ENCODE measurements at regions of chr15 and their contacts with region 1.

Region 1: GRCh38 chr15:79463043-79463780 is 31.1 kb downstream of the MINAR1 start:
- DNase-seq: no peak
- H3K4me3 ChIP-seq: no peak overlapping the region
- H3K27ac ChIP-seq: no peak overlapping the region
- H3K27me3 ChIP-seq: no peaks in the 10 kb centered on the region
- CTCF ChIP-seq: no peak

Region 2: DNA sequence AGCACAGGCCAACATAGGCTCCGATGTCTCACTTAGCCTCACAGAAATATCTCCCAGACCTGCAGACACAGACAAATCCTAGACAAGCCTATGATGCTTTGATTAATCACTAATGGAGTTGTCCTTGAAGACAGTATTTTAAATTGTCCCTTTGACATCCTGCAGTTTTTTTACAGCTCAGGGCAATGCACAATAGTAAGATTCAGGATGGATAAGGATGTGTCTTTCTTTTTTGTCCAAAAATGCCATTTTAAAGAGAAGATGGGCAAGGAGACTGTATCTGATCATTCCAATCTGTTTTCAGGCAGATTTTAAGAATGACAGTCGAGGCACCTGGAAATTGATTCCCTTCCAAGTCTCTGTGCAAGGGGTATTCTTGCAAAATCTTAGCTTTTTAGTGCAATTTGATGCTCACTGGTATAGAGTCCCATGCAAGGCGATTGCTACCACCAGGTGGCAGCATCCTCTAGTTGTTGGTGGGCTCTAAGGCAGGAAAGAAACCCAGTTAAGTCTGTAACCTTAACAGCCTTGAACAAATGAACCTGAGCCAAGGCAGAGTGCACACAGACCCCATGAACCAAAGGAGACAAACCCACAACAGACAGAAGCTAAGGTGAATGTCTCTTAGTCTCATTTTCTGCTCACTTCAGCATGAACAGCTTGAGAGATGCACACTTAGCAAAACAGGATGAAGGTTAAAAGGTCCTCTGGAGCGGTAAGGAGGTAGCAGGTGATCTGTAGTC is 82.3 kb before region 1 on chr15:
- intact Hi-C with region 1: no loop called
- DNase-seq: peak; percentile 74 to 91 (median 84)
- H3K4me3 ChIP-seq: no peak overlapping the region
- H3K27ac ChIP-seq: no peak overlapping the region
- H3K27me3 ChIP-seq: peaks cover 0 to 6% (median 0%) of the 10 kb centered on the region in 45 donors
- CTCF ChIP-seq: peak; percentile 83 to 100 (median 95)

Region 3: DNA sequence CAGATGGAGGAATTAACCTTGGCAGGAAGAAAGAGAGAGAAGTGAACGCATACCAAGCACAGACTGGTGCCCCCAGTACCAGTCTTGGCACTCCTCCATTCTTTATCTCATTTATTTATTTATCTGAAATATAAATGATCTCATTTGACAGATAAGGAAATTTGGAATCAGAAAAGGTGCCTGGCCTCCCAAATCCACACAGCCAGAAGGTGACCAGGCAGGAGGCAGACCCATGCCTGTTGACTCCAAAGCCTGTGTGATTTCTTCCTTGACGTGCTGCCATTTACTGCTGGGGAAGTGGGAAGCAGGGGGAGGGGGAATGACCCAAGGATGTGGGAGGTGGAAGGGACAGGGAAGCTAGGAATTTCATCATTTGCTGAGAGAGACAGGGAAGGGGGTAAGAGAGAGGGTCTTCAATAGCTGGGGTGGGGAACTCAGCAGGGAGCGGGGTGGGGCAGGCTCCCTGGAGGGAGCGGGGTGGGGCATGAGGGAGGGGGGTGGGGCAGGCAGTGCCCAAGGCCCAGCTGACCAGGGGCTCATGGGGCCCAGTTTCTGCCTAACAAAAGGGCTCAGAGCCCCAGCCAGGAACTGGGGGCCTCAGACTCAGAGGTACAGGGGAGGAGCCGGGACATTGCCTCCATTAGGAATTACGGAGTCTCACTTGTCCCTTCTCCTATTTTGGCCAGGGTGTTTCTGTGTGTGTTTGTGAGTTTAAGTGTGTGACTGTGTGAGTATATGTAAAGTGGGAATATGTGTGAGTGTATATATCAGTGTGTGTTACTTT is 31.9 kb after region 1 on chr15:
- intact Hi-C with region 1: loop called in 1 of 2 experiments (anchors 5 kb)
- DNase-seq: no peak
- H3K4me3 ChIP-seq: no peak overlapping the region
- H3K27ac ChIP-seq: no peak overlapping the region
- H3K27me3 ChIP-seq: peaks cover 0 to 13% (median 0%) of the 10 kb centered on the region in 45 donors
- CTCF ChIP-seq: no peak

Measured in dorsolateral prefrontal cortex (tissue), 120 donors.